Posterior vena cava (tissue), 2 donors: ENCODE measurements at regions of chr2 and their contacts with region 1.

Region 1: DNA sequence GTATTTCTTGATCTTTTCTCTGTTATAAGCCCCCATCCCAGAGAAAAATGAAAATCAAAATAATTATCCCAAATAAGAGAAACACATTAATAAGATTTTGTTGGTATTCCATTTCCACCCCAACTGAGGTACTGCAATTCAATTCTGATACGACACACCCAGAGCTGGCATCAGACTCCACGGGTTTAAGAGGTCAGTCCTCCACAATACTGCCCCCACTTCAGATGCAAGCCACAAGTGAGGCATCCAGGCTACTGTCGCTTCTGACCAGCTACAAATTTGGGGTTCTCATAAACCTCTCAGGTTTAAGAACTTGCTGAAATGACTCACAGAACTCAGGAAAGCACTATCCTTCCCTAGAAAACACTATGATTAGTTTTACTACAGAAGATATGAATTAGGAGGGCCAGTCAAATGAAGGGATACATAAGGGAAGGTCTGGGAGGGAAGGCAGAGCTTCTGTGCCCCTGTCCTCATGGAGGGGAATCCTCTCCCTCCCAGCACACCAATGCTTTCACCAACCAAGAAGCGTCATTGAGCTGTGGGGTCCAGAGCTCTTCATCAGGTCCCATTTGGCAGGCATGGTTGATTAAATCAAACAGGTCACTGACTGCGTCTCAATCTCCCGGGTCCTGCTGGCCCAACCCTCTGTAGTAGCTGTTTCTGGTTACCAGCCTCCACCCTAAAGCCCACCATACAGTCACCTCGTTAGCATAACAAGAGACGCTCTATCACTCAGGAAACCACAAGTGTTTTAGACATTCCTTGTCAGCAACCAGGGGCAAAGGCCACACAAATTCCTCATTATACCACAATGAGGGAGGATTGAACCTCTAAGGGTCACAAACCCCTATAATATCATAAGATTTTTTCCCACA is 46.2 kb downstream of the IWS1 start:
- DNase-seq: no peak

Region 2: GRCh38 chr2:127330753-127331152 is 149.4 kb before region 1 on chr2:
- intact Hi-C with region 1: loop called (anchors 5 kb)
- DNase-seq: no peak

Region 3: GRCh38 chr2:127342101-127342500 is 138.0 kb before region 1 on chr2:
- intact Hi-C with region 1: loop called in 1 of 2 experiments (anchors 5 kb)
- DNase-seq: no peak

Region 4: DNA sequence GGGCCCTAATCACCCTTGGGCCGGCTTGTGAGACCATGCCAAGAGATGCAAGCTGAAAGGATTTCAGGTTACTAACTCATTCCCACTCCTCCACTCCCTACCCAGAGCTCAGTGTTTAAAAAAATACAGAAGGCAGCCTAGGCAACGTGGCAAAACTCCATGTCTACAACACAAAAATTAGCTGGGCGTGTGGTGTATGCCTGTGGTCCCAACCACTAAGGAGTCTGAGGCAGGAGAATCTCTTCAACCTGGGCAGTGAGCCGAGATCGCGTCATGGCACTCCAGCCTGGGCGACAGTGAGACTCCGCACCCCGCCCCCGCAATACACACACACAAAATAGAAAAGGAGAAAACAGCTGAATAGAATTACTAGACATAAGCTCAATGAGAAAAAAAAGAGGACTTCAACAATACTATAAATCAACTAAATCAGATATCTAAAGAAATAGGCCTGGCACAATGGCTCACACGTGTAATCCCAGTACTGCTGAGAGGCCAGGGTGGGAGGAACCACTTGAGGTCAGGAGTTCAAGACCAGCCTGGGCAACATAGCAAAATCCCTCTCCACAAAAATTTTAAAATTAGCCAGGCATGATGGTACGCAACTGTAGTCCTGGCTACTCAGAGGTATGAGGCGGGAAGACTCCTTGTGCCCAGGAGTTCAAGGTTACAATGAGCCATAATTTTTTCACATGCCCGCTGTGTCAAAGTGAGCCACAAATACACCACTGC is 36.1 kb after region 1 on chr2:
- intact Hi-C with region 1: no loop called
- DNase-seq: peak; percentile 97